Activated CD8-positive, alpha-beta T cell treated with anti-CD3 and anti-CD28 coated beads for 36 hours (primary cell): ENCODE measurements at regions of chr4 and their contacts with region 1.

Region 1: GRCh38 chr4:1726146-1726934 is 5.0 kb downstream of the TACC3 start:
- DNase-seq: peak; percentile 95
- ATAC-seq: peak; percentile 29
- H3K4me3 Mint-ChIP-seq: no peak overlapping the region
- H3K27ac Mint-ChIP-seq: peak overlapping the region; percentile 73
- H3K4me1 Mint-ChIP-seq: peaks cover 58% of the 10 kb centered on the region
- H3K27me3 Mint-ChIP-seq: no peaks in the 10 kb centered on the region
- CTCF ChIP-seq: peak; percentile 95

Region 2: GRCh38 chr4:1640190-1640589 is 86.2 kb before region 1 on chr4:
- CTCF ChIA-PET with region 1: no interaction called
- POLR2A ChIA-PET with region 1: no interaction called
- intact Hi-C with region 1: no loop called
- DNase-seq: no peak
- ATAC-seq: no peak
- H3K4me3 Mint-ChIP-seq: no peak overlapping the region
- H3K27ac Mint-ChIP-seq: no peak overlapping the region
- H3K4me1 Mint-ChIP-seq: no peaks in the 10 kb centered on the region
- H3K27me3 Mint-ChIP-seq: no peaks in the 10 kb centered on the region
- CTCF ChIP-seq: no peak

Region 3: GRCh38 chr4:1712216-1713002 is 13.9 kb before region 1 on chr4 and contains the start of gene SLBP:
- CTCF ChIA-PET with region 1: interaction called, 12 read pairs
- POLR2A ChIA-PET with region 1: interaction called, 190 read pairs
- intact Hi-C with region 1: no loop called
- DNase-seq: peak; percentile 99
- ATAC-seq: peak; percentile 91
- H3K4me3 Mint-ChIP-seq: peak within 1 kb of the TSS; percentile 92
- H3K27ac Mint-ChIP-seq: peak within 1 kb of the TSS; percentile 100
- H3K4me1 Mint-ChIP-seq: peaks cover 54% of the 10 kb centered on the region
- H3K27me3 Mint-ChIP-seq: no peaks in the 10 kb centered on the region
- CTCF ChIP-seq: no peak
- total RNA-seq, gene SLBP: 115 to 117 TPM